Heart left ventricle (tissue), 16 donors: ENCODE measurements at regions of chr9 and their contacts with region 1.

Region 1: DNA sequence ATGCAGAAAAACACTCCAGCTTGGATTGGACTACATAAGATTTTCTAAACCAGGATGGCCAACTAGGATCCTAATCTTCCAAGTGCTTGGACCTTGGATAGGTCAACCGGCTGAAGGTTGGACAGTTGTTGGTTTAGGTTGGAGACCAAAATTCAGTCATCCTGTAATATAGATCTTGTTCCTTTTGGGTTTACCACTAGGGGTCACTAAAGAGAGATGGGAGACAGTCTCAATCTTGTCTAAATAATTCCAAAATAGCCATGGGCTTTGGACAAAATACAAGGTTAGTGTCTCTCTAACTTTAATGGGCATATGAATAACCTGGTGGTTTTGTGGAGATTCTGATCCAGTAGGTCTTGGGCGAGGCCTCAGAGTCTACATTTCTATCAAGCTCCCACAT is 148.7 kb upstream of the ERCC6L2 start:
- DNase-seq: no peak
- ATAC-seq: peak in 3 of 4 donors; percentile 45 to 59 (median 58)
- H3K4me3 ChIP-seq: no peak overlapping the region
- H3K27ac ChIP-seq: no peak overlapping the region
- H3K4me1 ChIP-seq: peaks cover 0 to 5% (median 0%) of the 10 kb centered on the region in 12 donors
- H3K27me3 ChIP-seq: no peaks in the 10 kb centered on the region
- CTCF ChIP-seq: peak; percentile 49 to 81 (median 68)
- POLR2A ChIP-seq: no peak

Region 2: DNA sequence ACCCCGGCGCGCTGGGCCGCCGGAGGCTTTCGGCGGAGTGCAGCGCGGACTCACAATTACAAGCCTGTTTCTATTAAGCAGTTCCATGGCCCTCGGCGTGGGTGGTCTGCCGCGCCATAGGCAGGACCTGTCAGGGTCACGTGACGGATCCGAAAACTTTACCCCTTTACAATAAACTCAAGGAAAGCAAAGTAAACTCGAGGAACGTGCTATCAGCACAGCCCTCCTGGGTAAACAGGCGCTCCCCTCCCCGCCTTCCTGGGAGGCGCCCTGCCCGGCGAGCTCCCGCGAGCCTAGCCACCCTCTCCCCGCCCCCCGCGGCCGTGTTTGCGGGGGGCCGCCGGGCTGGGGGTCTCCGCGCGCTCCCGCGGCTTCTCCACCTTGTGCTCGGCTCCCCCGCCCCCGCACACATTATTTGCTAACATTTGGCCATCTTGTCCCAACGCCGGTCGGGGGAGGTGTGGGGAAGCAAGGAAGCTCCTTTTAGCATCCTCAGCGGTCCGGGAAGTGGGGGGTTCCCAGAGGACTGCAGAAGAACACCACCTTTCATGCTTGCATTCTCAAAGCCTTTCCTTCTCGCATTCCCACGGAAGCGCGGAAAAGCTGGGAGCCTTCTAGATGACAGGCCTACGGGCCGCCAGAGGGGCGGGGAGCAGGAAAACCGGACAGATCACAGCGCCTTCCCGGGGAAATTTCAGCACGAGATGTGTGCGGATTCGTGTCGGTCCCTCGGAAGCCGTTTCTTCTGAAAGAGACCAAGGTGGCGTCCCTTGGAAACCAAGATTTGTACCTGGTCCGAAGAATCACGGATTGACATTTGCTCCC is 209.8 kb before region 1 on chr9 and contains the start of gene PTCH1:
- intact Hi-C with region 1: loop called in 2 of 10 experiments (anchors 5 kb)
- DNase-seq: peak in 4 of 5 donors; percentile 36 to 51 (median 44)
- ATAC-seq: peak; percentile 62 to 81 (median 72)
- H3K4me3 ChIP-seq: peak within 1 kb of the TSS; percentile 28 to 70 (median 60)
- H3K27ac ChIP-seq: peak within 1 kb of the TSS in 6 of 12 donors; percentile 25 to 64 (median 38)
- H3K4me1 ChIP-seq: peaks cover 3 to 29% (median 14%) of the 10 kb centered on the region in 12 donors
- H3K27me3 ChIP-seq: peaks cover 0 to 34% (median 0%) of the 10 kb centered on the region in 9 donors
- CTCF ChIP-seq: peak in 1 of 12 donors; percentile 10
- POLR2A ChIP-seq: no peak
- total RNA-seq, gene PTCH1: 2.9 to 15.2 (median 6.6) TPM

Region 3: GRCh38 chr9:95522871-95523370 is 203.8 kb before region 1 on chr9:
- intact Hi-C with region 1: loop called in 2 of 10 experiments (anchors 5 kb)
- DNase-seq: no peak
- ATAC-seq: no peak
- H3K4me3 ChIP-seq: no peak overlapping the region
- H3K27ac ChIP-seq: no peak overlapping the region
- H3K4me1 ChIP-seq: no peaks in the 10 kb centered on the region
- H3K27me3 ChIP-seq: peaks cover 0 to 14% (median 0%) of the 10 kb centered on the region in 9 donors
- CTCF ChIP-seq: no peak
- POLR2A ChIP-seq: no peak

Region 4: DNA sequence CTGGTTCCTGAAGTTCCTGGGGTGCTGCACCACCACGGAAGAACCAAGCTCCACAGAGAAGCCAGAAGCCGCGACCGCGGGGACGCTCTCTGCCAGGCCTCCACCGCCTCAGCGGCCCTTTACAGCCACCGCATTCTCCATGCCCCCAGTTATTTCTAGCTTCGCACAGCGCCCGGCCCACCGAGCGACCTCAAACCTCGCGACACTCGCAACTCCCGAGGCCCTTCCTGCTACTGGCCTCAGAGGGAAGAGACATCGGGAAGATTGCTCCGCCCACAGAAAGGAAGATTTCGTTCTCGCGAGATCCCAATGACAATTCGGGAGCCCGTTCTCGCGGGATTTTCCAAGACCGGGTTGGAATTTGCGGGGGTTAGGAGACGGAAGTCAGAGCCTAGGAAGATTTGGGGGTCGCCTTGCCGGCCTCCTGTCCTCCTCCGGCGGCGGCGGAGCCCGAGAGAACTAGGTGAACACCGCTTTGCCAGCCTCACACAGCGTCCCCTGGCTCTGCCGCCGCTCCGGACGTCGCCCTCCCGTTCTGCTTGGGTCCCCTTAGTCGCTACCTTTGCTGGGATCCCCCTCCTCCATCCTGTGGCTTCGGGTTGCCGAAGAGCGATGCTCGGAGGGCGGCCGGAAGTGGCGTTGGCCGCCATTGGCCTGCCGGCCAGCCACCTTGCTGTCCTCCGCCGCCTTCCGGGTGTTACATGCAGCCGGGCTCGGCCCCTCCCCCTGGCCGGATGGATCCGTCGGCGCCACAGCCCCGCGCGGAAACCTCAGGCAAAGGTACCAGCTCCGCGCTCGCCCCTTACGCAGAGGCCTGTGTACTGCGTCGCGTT is 148.8 kb after region 1 on chr9 and contains the start of gene ERCC6L2:
- intact Hi-C with region 1: loop called in 1 of 10 experiments (anchors 5 kb)
- DNase-seq: peak; percentile 95 to 97 (median 96)
- ATAC-seq: peak; percentile 97 to 98 (median 97)
- H3K4me3 ChIP-seq: peak within 1 kb of the TSS in 2 of 12 donors; percentile 62 to 78
- H3K27ac ChIP-seq: peak within 1 kb of the TSS in 4 of 12 donors; percentile 98 to 100 (median 99)
- H3K4me1 ChIP-seq: peaks cover 0 to 27% (median 20%) of the 10 kb centered on the region in 12 donors
- H3K27me3 ChIP-seq: no peaks in the 10 kb centered on the region
- CTCF ChIP-seq: peak in 3 of 12 donors; percentile 6 to 16 (median 15)
- POLR2A ChIP-seq: peak in 1 of 2 donors; percentile 68
- total RNA-seq, gene ERCC6L2: 21.3 to 46.8 (median 27.6) TPM

Region 5: GRCh38 chr9:96061293-96061987 is 334.7 kb after region 1 on chr9:
- intact Hi-C with region 1: loop called in 6 of 10 experiments (anchors 5 to 10 kb)
- DNase-seq: peak in 2 of 5 donors; percentile 37 to 40
- ATAC-seq: peak in 3 of 4 donors; percentile 72 to 84 (median 77)
- H3K4me3 ChIP-seq: peak overlapping the region in 1 of 12 donors; percentile 18
- H3K27ac ChIP-seq: peak overlapping the region in 2 of 12 donors; percentile 19 to 90
- H3K4me1 ChIP-seq: peaks cover 0 to 35% (median 0%) of the 10 kb centered on the region in 12 donors
- H3K27me3 ChIP-seq: no peaks in the 10 kb centered on the region
- CTCF ChIP-seq: peak; percentile 22 to 60 (median 43)
- POLR2A ChIP-seq: no peak